Endothelial cell of umbilical vein (primary cell): ENCODE measurements at regions of chr13 and their contacts with region 1.

Region 1: GRCh38 chr13:41562083-41562482 is 104.7 kb downstream of the RGCC start:
- DNase-seq: peak; percentile 49
- H3K4me3 ChIP-seq: no peak overlapping the region
- H3K27ac ChIP-seq: no peak overlapping the region
- H3K4me1 ChIP-seq: peaks cover 31% of the 10 kb centered on the region
- H3K27me3 ChIP-seq: no peaks in the 10 kb centered on the region
- CTCF ChIP-seq: no peak
- POLR2A ChIP-seq: no peak

Region 2: GRCh38 chr13:40982772-40983171 is 579.3 kb before region 1 on chr13:
- CTCF ChIA-PET with region 1: no interaction called
- POLR2A ChIA-PET with region 1: no interaction called
- dilution Hi-C with region 1: no loop called
- intact Hi-C with region 1: no loop called
- DNase-seq: peak; percentile 95
- H3K4me3 ChIP-seq: peak overlapping the region; percentile 51 to 97 (median 91)
- H3K27ac ChIP-seq: peak overlapping the region; percentile 99
- H3K4me1 ChIP-seq: peaks cover 69% of the 10 kb centered on the region
- H3K27me3 ChIP-seq: no peaks in the 10 kb centered on the region
- CTCF ChIP-seq: no peak
- POLR2A ChIP-seq: peak; percentile 69

Region 3: GRCh38 chr13:41596190-41596589 is 34.1 kb after region 1 on chr13:
- CTCF ChIA-PET with region 1: no interaction called
- POLR2A ChIA-PET with region 1: no interaction called
- dilution Hi-C with region 1: no loop called
- intact Hi-C with region 1: loop called (anchors 2 kb)
- DNase-seq: peak; percentile 70
- H3K4me3 ChIP-seq: no peak overlapping the region
- H3K27ac ChIP-seq: peak overlapping the region; percentile 38
- H3K4me1 ChIP-seq: peaks cover 12% of the 10 kb centered on the region
- H3K27me3 ChIP-seq: no peaks in the 10 kb centered on the region
- CTCF ChIP-seq: peak in 1 of 2 donors; percentile 10
- POLR2A ChIP-seq: no peak

Region 4: DNA sequence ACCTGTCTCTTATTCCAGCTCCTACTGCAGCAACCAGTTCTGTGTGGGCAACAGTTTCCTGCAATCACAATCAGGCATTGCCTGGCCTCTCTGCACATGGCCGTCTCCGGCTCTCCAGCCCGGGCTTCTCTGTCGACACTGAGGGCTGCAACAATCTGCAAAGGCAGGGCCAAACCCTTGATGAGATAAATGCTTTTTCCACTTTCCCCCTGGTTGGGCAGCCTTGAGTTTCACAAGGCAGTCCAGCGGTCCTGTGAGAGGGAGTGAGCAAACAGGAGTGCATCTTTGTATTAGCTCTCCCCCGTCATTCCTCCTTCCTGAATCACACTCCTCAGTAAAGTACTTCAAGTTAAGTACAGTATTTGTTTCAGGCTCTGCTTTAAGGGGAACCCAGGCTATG is 439.5 kb after region 1 on chr13:
- CTCF ChIA-PET with region 1: no interaction called
- POLR2A ChIA-PET with region 1: no interaction called
- dilution Hi-C with region 1: no loop called
- intact Hi-C with region 1: no loop called
- DNase-seq: no peak
- H3K4me3 ChIP-seq: no peak overlapping the region
- H3K27ac ChIP-seq: no peak overlapping the region
- H3K4me1 ChIP-seq: no peaks in the 10 kb centered on the region
- H3K27me3 ChIP-seq: peaks cover 9 to 19% of the 10 kb centered on the region in 2 experiments
- CTCF ChIP-seq: no peak
- POLR2A ChIP-seq: no peak